Activated T-helper 1 cell treated with anti-CD3 and anti-CD28 coated beads, Interleukin-12 subunit alpha, Interleukin-12 subunit beta, Interleukin-2, Interleukin-4 antibody, amounts not matched to agents 30 ng/mL and 10 ng/mL and 1 ng/mL, durations not matched to agents 14 hours and 24 hours and 36 hours (primary cell): ENCODE measurements at regions of chr22 and their contacts with region 1.

Region 1: DNA sequence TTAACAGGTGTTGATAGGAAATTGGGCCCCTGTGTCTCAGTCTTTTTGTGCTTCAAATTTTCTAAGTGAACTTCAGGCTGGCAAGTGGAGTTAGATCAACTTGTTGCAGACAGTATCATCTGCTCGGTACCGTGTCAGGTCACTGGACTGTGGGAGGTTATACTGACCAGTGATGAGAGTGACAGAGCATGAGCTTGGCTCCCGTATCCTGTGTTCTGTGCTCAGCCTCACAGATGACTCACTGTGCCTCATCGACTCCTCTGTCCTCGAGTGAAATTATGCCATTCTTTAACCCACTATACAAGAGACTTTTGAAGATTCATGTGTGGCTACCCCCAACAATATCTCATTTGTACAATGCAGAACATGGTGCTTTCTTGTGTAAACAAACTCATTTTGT is 7.9 kb downstream of the GRAP2 start:
- DNase-seq: no peak
- H3K4me3 Mint-ChIP-seq: peak overlapping the region; percentile 92
- H3K27ac Mint-ChIP-seq: peak overlapping the region; percentile 96
- H3K4me1 Mint-ChIP-seq: peaks cover 95% of the 10 kb centered on the region
- H3K27me3 Mint-ChIP-seq: no peaks in the 10 kb centered on the region

Region 2: GRCh38 chr22:39773976-39774539 is 134.7 kb before region 1 on chr22:
- intact Hi-C with region 1: loop called (anchors 2 kb)
- DNase-seq: peak; percentile 64
- H3K4me3 Mint-ChIP-seq: peak overlapping the region; percentile 19
- H3K27ac Mint-ChIP-seq: peak overlapping the region; percentile 64
- H3K4me1 Mint-ChIP-seq: peaks cover 60% of the 10 kb centered on the region
- H3K27me3 Mint-ChIP-seq: no peaks in the 10 kb centered on the region

Region 3: GRCh38 chr22:39859903-39860588 is 48.7 kb before region 1 on chr22:
- intact Hi-C with region 1: no loop called
- DNase-seq: no peak
- H3K4me3 Mint-ChIP-seq: no peak overlapping the region
- H3K27ac Mint-ChIP-seq: no peak overlapping the region
- H3K4me1 Mint-ChIP-seq: peaks cover 18% of the 10 kb centered on the region
- H3K27me3 Mint-ChIP-seq: peaks cover 17% of the 10 kb centered on the region

Region 4: GRCh38 chr22:39927544-39927943 is 18.8 kb after region 1 on chr22:
- intact Hi-C with region 1: loop called (anchors 2 kb)
- DNase-seq: no peak
- H3K4me3 Mint-ChIP-seq: no peak overlapping the region
- H3K27ac Mint-ChIP-seq: no peak overlapping the region
- H3K4me1 Mint-ChIP-seq: peaks cover 37% of the 10 kb centered on the region
- H3K27me3 Mint-ChIP-seq: no peaks in the 10 kb centered on the region

Region 5: DNA sequence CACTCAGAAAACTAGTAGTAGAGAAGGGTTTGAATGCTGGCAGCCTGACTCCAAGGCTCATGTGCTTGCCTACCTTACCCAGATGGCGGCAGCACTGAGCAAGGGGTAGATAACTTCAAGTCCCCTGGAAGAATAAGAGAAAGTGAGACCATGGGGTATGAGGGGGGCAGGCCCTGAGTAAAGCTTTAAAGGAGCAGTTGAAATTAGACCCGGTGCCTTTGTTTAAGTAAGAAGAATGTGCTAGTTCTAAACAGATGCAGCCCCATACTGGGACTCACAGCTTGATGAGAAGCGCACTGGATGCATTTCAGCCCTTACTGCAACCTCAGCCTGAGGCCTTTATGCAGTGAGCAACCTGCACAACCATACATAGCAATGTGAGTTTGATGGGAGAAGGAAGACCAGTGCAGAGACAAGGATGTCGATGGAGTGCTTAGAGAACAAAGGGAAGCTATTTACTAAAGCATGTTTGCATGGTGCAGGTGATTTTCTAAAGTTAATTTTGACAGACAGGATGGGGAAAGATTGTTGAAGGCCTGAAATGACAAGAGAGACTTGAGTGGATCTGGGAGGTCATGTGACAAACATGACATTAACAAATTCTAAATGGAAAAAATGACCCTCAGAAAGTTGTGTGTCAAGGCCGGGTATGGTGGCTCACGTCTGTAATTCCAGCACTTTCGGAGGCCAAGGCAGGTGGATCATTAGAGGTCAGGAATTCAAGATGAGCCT is 24.3 kb after region 1 on chr22:
- intact Hi-C with region 1: loop called (anchors 1 kb)
- DNase-seq: no peak
- H3K4me3 Mint-ChIP-seq: peak overlapping the region; percentile 80
- H3K27ac Mint-ChIP-seq: peak overlapping the region; percentile 91
- H3K4me1 Mint-ChIP-seq: peaks cover 55% of the 10 kb centered on the region
- H3K27me3 Mint-ChIP-seq: no peaks in the 10 kb centered on the region